ENCODE measurements at regions of chr17 and their contacts with region 1.

Region 1: DNA sequence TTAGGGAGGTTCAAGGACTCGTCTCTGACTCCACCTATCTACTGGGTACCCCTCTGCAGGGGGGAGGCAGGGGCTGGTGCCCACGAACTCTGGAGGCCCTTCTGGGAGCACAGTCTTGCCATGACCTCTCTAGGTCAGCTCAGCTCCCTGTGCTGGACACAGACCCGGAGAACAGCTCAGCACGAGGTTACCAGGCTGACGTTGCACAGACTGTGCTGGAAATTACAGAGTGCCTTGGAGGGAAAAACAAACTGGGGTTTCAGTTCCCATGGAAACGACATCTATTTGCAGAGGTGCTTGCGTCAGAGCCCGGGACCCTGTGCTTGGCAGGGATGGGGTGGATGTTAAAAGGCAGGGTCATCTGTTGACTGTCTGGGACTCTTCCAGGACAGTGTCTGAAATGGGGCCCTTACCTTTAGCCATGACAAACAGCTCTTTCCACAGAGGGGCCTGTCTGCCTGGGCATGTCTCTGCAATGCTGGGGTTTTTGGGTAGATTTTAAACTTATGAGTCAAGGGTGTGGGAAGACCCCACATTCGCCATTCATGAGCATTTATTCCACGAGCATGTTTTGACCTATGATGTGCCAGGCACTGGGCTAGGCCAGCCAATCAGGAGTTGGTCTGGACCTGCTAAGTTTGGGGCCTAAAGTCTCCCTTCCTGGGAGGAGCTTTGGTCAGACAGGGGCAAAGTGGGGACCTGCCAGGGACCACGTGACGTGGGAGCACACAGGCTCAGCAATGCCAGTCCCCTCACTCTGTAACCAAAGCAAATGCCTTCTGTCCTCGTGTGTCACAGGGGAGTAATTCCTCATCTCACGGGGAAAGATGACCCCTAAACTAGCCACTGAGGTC is 22.5 kb downstream of the CCR7 start:
- DNase-seq: peak; percentile 84
- H3K4me3 ChIP-seq: no peak overlapping the region
- H3K27me3 ChIP-seq: no peaks in the 10 kb centered on the region
- CTCF ChIP-seq: no peak

Region 2: DNA sequence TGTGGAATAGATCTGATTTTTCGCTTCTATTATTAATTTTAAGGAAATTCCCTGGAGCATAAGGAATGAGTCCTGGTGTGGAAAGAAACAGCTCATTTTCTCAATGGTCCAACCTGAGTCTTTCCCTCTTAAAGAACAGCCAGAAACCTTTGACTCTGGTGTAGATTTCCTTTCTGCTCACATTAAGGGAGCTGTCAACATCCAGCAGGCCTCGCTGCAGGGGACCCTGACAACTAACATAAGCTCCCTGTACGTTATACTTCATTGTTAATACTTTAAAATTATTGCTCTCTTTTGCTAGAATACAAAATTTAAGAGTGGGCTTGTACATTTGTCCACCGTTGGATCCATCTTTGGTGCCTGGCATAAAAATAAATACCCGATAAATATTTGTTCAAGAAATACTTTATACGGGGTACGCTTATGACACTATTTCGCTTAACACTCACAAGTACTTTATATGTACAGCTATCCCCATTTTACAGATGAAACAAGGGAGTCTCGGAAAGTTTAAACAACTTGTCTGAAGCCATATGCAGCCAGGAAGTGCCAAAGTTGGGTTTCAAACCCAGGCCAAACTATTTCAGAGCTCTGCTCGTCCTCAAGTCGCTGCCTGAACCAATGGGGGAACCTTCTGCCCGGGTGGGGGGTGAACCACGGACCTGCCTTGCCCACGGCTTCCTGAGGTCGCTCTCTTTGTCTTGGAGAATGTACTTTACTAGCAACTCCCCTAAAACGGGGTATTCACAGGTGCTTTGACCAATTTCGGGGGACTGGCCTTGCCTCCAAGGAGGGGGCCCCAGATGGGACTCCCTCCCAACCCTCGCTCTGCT is 104.2 kb after region 1 on chr17:
- CTCF ChIA-PET with region 1: no interaction called
- POLR2A ChIA-PET with region 1: no interaction called
- DNase-seq: no peak
- H3K4me3 ChIP-seq: peak overlapping the region; percentile 74
- H3K27me3 ChIP-seq: no peaks in the 10 kb centered on the region
- CTCF ChIP-seq: no peak

Region 3: GRCh38 chr17:41013181-41013580 is 470.4 kb after region 1 on chr17:
- CTCF ChIA-PET with region 1: no interaction called
- POLR2A ChIA-PET with region 1: interaction called, 14 read pairs
- DNase-seq: peak; percentile 91
- H3K4me3 ChIP-seq: no peak overlapping the region
- H3K27me3 ChIP-seq: no peaks in the 10 kb centered on the region
- CTCF ChIP-seq: no peak

Measured in BJ (cell line).